Dendritic cell treated with granulocyte-macrophage colony-stimulating factor and Interleukin-4, amounts not matched to agents 40 ng/mL and 50 ng/mL, for 4 days (primary cell): ENCODE measurements at regions of chr1 and their contacts with region 1.

Region 1: GRCh38 chr1:31054958-31055481 is 10.5 kb downstream of the PUM1 start:
- H3K4me3 Mint-ChIP-seq: no peak overlapping the region
- H3K27ac Mint-ChIP-seq: no peak overlapping the region
- H3K4me1 Mint-ChIP-seq: peaks cover 28% of the 10 kb centered on the region
- H3K27me3 Mint-ChIP-seq: no peaks in the 10 kb centered on the region

Region 2: DNA sequence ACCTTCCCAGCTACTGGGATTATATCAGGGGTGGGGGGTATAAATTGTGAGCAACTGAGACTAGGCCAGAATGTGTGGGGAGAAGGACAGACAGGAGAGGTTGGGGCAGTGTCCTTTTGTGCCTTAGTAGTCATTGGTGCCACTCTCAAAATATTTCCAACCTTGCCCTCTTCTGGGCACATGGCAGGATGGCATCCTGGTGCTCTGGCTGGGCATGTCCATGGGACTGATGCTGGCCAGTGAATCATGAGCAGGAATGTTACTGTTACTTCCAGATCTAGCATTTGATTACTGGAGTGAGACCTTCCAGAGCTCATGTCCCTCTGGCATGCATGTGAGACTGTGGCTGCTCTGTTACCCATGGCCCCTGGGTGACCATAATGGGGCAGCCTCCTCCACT is 482.8 kb before region 1 on chr1:
- intact Hi-C with region 1: no loop called
- H3K4me3 Mint-ChIP-seq: no peak overlapping the region
- H3K27ac Mint-ChIP-seq: no peak overlapping the region
- H3K4me1 Mint-ChIP-seq: no peaks in the 10 kb centered on the region
- H3K27me3 Mint-ChIP-seq: peaks cover 6% of the 10 kb centered on the region

Region 3: GRCh38 chr1:31020007-31020790 is 34.8 kb before region 1 on chr1:
- intact Hi-C with region 1: loop called (anchors 5 kb)
- H3K4me3 Mint-ChIP-seq: no peak overlapping the region
- H3K27ac Mint-ChIP-seq: no peak overlapping the region
- H3K4me1 Mint-ChIP-seq: peaks cover 36% of the 10 kb centered on the region
- H3K27me3 Mint-ChIP-seq: no peaks in the 10 kb centered on the region

Region 4: DNA sequence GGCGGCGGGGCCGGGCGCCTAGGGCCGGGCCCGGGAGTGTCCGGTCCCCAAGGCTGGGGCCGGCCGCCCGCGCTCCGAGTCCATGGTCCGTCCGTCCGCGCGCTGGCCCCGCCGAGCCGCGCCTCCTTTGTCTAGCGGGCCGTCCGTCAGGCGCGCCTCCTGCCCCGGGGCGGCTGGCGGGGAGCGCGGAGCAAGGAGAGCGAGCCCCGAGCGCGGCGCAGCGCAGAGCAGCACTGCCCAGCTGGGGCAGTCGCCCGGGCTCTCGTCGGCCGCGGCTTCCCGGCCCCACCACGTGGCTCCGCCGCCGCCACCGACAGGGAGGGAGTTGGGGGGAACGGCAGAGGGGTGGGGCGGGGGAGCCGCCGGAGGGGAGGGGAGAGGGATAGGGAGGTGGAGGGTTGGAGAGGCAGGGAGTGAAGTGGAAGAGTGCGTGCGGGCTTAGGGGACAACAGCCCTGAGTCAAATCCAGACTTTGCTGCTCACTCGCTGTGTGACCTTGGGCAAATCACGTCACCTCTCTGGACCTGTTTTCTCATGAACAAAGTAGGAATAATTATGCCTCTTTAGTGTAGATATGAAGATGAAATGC is 184.7 kb after region 1 on chr1 and contains the start of gene NKAIN1:
- intact Hi-C with region 1: no loop called
- H3K4me3 Mint-ChIP-seq: peak within 1 kb of the TSS; percentile 56
- H3K27ac Mint-ChIP-seq: no peak within 1 kb of the TSS
- H3K4me1 Mint-ChIP-seq: peaks cover 15% of the 10 kb centered on the region
- H3K27me3 Mint-ChIP-seq: peaks cover 70% of the 10 kb centered on the region